ENCODE measurements at regions of chr20 and their contacts with region 1.

Region 1: DNA sequence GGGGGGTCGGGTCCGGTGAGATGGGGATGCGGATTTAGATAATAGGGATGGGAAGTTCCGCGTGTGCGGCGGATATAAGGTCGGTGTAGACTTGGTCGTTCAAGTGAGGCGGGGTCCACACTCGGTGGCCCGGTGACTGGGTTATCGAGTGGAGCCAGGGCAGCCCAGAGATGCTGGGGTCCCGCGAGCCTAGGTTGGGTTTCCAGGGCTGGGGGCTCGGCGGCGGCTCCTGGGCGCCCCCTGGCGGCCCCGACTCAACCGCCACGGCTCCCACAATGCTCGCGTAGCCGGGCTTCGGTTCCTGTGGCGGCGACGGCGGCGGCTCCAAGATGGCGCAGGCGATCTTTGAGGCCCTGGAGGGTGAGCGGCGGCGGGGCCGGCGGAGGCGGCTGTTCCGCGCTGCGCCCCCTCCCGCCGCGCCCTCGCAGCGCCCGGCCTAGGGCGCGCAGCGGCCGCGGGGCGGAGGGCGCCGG is at the start of gene ZNF341:
- DNase-seq: peak; percentile 54
- H3K4me3 ChIP-seq: peak within 1 kb of the TSS; percentile 51 to 82 (median 62)
- H3K27ac ChIP-seq: peak within 1 kb of the TSS; percentile 92 to 97 (median 95)
- H3K4me1 ChIP-seq: peaks cover 23 to 31% (median 25%) of the 10 kb centered on the region in 3 donors
- H3K27me3 ChIP-seq: no peaks in the 10 kb centered on the region
- CTCF ChIP-seq: peak; percentile 81 to 95 (median 90)
- POLR2A ChIP-seq: peak in 1 of 4 donors; percentile 27
- total RNA-seq, gene ZNF341: 1.7 to 4.0 (median 3.2) TPM

Region 2: DNA sequence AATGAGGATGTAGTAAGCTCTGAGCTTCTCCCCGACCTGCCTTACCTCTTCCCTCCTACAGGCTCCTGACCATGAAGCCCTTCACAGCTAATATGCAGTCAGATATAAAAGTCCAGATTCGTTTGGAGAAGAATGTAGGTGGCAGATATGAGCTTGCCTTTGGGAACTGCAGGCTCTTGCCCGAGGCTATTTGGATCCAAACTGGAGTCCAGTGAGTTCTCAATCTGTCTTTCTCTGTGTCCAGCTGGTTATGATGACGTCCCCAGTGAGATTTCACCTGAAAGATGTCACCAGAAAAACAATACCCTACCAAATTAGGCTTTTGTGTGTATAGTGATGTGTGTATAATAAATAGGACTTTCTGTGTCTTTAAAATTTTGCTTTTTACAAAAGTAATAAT is 529.3 kb before region 1 on chr20:
- intact Hi-C with region 1: no loop called
- DNase-seq: no peak
- H3K4me3 ChIP-seq: no peak overlapping the region
- H3K27ac ChIP-seq: no peak overlapping the region
- H3K4me1 ChIP-seq: no peaks in the 10 kb centered on the region
- H3K27me3 ChIP-seq: peaks cover 0 to 91% (median 0%) of the 10 kb centered on the region in 4 donors
- CTCF ChIP-seq: no peak
- POLR2A ChIP-seq: no peak

Region 3: DNA sequence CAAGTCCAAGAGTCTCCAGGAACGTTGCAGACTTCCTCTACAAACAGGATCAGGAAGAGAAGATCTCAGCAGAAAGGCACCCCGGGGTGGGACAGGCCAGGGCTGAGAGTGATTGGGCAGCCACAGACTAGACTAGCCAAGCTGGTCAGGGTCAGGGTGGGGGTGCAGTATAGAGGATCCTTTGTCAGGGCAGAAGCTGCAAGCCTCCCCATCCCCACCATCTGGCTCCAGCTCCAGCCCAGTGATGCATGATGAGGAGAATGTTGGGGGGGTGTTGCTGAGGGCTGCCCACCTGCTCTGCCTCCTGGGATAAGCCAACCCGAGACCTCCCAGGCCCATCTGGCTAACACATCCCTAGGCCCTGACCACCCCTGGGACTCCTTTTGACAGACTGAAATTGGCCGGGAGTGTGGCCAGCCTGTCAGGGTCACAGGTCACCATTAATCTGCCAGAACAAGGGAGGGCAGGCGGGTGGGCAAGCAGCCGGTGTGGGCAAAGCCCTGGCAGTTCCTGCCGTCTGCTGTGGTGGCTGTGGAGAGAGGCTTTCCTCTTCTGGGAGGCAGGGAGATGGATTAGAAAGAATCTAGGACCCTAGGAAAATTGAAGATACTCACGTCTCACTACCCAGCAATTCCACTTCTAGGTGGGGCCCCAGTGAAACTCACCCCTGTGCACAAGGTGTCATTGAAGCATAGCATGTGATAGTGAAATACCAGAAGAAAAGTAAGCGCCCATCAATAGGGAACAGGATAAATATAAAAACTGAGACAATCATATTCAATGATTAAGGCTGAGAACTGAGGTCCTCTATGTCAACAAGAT is 266.0 kb before region 1 on chr20:
- intact Hi-C with region 1: loop called (anchors 10 kb)
- DNase-seq: no peak
- H3K4me3 ChIP-seq: no peak overlapping the region
- H3K27ac ChIP-seq: no peak overlapping the region
- H3K4me1 ChIP-seq: no peaks in the 10 kb centered on the region
- H3K27me3 ChIP-seq: no peaks in the 10 kb centered on the region
- CTCF ChIP-seq: no peak
- POLR2A ChIP-seq: no peak